ENCODE measurements at regions of chr17 and their contacts with region 1.

Region 1: DNA sequence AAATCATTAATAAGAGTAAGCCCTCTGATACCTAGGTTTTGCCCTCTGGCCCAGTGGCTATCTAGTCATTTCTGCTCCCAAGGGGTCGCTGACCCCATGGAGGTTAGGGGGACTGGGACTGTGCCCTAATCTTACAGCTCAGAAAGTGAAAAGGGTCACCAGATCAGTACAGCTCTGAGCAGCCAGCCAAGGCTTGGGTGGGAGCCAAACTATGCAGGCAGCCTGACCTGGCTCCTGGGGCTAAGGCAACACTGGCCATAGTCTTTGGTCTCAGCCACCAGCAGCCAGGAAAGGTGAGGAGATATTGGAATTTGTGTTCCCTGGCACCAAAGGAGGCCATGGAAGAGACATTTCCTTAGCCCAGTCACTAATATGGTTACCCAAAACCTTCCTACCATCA is 67.6 kb downstream of the ASIC2 start:
- DNase-seq: no peak
- H3K4me3 ChIP-seq: no peak overlapping the region
- H3K27me3 ChIP-seq: peaks cover 1% of the 10 kb centered on the region; the same call in 1 of the 2 replicates
- CTCF ChIP-seq: no peak

Region 2: GRCh38 chr17:32859857-32860525 is 365.5 kb before region 1 on chr17:
- CTCF ChIA-PET with region 1: no interaction called
- POLR2A ChIA-PET with region 1: no interaction called
- DNase-seq: no peak
- H3K4me3 ChIP-seq: no peak overlapping the region
- H3K27me3 ChIP-seq: no peaks in the 10 kb centered on the region
- CTCF ChIP-seq: no peak

Region 3: GRCh38 chr17:33342025-33342424 is 116.5 kb after region 1 on chr17:
- CTCF ChIA-PET with region 1: no interaction called
- POLR2A ChIA-PET with region 1: interaction called, 14 read pairs
- DNase-seq: no peak
- H3K4me3 ChIP-seq: no peak overlapping the region
- H3K27me3 ChIP-seq: peaks cover 1% of the 10 kb centered on the region; the same call in 1 of the 2 replicates
- CTCF ChIP-seq: no peak

Measured in BJ (cell line).